Vagina (tissue), 2 donors: ENCODE measurements at regions of chr19 and their contacts with region 1.

Region 1: GRCh38 chr19:47381653-47382279 is 32.7 kb downstream of the DHX34 start:
- DNase-seq: no peak
- H3K4me3 ChIP-seq: no peak overlapping the region
- H3K27ac ChIP-seq: no peak overlapping the region
- H3K4me1 ChIP-seq: no peaks in the 10 kb centered on the region
- H3K27me3 ChIP-seq: no peaks in the 10 kb centered on the region
- CTCF ChIP-seq: no peak
- POLR2A ChIP-seq: no peak

Region 2: GRCh38 chr19:47305309-47305751 is 76.4 kb before region 1 on chr19:
- intact Hi-C with region 1: loop called (anchors 10 kb)
- DNase-seq: no peak
- H3K4me3 ChIP-seq: no peak overlapping the region
- H3K27ac ChIP-seq: no peak overlapping the region
- H3K4me1 ChIP-seq: no peaks in the 10 kb centered on the region
- H3K27me3 ChIP-seq: no peaks in the 10 kb centered on the region
- CTCF ChIP-seq: peak; percentile 74 to 76 (median 75)
- POLR2A ChIP-seq: no peak